ENCODE measurements at regions of chr1 and their contacts with region 1.

Region 1: DNA sequence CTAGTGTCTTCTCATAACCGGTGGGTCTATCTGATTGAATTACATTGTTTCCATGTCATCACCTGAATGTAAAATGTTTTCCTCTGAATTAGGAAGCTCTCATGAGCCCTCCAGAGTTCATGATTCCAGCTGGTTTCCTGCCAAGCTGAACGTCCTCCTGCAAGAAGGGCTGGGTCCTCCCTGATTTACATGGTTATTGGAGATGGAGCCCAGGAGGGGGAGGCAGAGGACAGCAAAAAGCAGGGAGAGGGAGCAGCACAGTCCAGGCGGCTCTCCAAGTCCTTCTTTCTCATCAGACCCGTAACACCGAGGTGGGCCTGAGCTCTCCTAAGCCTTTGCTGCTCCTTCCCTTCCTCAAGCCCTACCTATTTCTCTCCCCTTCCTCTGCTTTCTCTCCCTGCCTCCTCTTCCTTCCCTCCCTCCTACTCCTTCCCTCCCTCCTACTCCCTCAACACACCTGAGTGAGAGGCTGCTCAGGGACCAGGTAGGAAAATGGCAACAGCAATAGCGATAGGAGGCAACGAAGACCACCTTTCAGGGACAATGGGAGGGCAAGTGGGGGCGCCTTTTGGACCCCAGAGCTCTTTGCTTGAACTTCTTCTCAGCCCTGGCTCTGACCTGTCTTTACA is 265.9 kb downstream of the PRDM2 start:
- DNase-seq: peak; percentile 68
- H3K4me3 Mint-ChIP-seq: no peak overlapping the region
- H3K27ac Mint-ChIP-seq: no peak overlapping the region
- H3K4me1 Mint-ChIP-seq: peaks cover 9% of the 10 kb centered on the region
- H3K27me3 Mint-ChIP-seq: no peaks in the 10 kb centered on the region
- CTCF ChIP-seq: peak; percentile 79

Region 2: DNA sequence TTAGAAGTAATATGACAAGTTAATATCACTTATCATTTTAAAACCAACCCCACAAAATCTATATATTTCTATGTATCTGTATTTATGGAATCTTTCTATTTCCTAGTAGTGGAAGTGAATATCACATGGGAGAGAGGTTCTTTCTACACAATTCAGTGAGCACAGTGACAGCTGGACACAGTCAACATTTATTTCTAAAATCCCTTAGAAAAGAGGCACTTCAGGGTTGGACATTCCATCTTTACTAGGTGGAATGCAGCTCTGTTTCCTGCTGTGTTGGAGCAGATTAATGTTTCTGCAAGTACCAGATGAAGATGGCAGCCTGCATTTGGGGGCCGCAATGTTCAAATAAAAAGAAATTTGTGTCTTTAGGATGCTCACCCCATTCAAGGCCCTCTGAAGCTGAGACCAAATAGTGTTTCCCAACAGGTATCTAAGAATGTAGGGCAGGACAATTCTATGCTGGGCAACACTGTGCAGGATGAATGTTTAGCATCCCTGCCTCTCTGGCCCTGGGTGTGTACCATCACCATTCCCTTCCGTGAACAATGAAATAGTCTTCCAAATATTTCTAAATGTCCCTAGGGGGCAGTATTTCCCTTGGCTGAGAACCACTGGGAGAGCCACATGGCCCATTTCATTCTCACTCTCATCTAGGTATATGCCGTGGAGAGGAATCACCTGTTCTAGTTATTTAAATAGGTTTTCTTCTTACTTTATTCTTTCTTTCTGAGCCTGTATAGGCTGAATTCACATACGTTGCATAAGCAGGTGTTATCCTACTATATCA is 128.9 kb after region 1 on chr1:
- CTCF ChIA-PET with region 1: interaction called, 3 read pairs
- POLR2A ChIA-PET with region 1: no interaction called
- intact Hi-C with region 1: loop called (anchors 5 kb)
- DNase-seq: peak; percentile 43
- H3K4me3 Mint-ChIP-seq: no peak overlapping the region
- H3K27ac Mint-ChIP-seq: no peak overlapping the region
- H3K4me1 Mint-ChIP-seq: peaks cover 4% of the 10 kb centered on the region
- H3K27me3 Mint-ChIP-seq: no peaks in the 10 kb centered on the region
- CTCF ChIP-seq: peak; percentile 43

Region 3: GRCh38 chr1:14113841-14114567 is 148.1 kb after region 1 on chr1:
- CTCF ChIA-PET with region 1: interaction called, 12 read pairs
- POLR2A ChIA-PET with region 1: interaction called, 5 read pairs
- intact Hi-C with region 1: loop called (anchors 1 kb)
- DNase-seq: peak; percentile 65
- H3K4me3 Mint-ChIP-seq: no peak overlapping the region
- H3K27ac Mint-ChIP-seq: no peak overlapping the region
- H3K4me1 Mint-ChIP-seq: peaks cover 43% of the 10 kb centered on the region
- H3K27me3 Mint-ChIP-seq: no peaks in the 10 kb centered on the region
- CTCF ChIP-seq: peak; percentile 82

Region 4: DNA sequence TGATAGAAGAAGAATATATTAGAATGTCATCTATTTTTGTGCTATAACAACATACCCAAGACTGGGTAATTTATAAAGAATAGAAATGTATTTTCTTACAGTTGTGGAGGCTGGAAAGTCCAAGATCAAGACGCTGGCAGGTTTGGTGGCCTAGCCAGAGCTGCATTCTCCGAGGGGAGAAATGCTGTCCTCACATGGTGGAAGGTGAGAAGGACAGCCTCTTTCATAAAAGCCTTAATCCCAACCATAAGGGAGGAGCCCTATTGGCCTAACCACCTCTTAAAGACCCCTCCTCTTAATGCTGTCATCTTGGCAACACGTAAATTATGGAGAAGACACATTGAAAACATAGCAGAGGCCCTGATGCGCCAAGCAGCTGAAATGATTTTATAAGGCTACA is 572.5 kb after region 1 on chr1:
- CTCF ChIA-PET with region 1: interaction called, 3 read pairs
- POLR2A ChIA-PET with region 1: no interaction called
- intact Hi-C with region 1: loop called (anchors 5 kb)
- DNase-seq: no peak
- H3K4me3 Mint-ChIP-seq: no peak overlapping the region
- H3K27ac Mint-ChIP-seq: no peak overlapping the region
- H3K4me1 Mint-ChIP-seq: peaks cover 10% of the 10 kb centered on the region
- H3K27me3 Mint-ChIP-seq: no peaks in the 10 kb centered on the region
- CTCF ChIP-seq: no peak

Region 5: DNA sequence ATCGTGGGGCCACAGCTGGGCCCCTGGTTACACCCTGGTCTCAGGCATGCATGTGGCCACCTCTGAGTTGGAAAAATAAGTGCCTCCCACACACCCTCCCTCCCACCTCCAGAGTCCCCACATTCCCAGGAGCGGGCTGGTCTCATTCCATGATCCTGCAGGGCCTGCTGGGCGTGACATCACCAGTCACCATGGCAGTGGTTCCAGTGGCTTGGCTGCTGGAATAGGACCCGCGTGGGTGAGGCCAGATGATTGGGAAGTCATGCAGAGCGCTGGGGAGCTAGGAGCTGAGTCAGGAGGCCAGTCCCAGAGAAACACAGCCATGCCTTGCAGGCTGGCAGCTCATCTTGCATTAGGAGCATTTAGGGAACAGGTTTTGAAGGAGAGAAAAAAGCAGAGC is 1062.2 kb after region 1 on chr1:
- CTCF ChIA-PET with region 1: interaction called, 10 read pairs
- POLR2A ChIA-PET with region 1: no interaction called
- intact Hi-C with region 1: loop called (anchors 5 kb)
- DNase-seq: no peak
- H3K4me3 Mint-ChIP-seq: no peak overlapping the region
- H3K27ac Mint-ChIP-seq: no peak overlapping the region
- H3K4me1 Mint-ChIP-seq: peaks cover 9% of the 10 kb centered on the region
- H3K27me3 Mint-ChIP-seq: no peaks in the 10 kb centered on the region
- CTCF ChIP-seq: no peak

Region 6: DNA sequence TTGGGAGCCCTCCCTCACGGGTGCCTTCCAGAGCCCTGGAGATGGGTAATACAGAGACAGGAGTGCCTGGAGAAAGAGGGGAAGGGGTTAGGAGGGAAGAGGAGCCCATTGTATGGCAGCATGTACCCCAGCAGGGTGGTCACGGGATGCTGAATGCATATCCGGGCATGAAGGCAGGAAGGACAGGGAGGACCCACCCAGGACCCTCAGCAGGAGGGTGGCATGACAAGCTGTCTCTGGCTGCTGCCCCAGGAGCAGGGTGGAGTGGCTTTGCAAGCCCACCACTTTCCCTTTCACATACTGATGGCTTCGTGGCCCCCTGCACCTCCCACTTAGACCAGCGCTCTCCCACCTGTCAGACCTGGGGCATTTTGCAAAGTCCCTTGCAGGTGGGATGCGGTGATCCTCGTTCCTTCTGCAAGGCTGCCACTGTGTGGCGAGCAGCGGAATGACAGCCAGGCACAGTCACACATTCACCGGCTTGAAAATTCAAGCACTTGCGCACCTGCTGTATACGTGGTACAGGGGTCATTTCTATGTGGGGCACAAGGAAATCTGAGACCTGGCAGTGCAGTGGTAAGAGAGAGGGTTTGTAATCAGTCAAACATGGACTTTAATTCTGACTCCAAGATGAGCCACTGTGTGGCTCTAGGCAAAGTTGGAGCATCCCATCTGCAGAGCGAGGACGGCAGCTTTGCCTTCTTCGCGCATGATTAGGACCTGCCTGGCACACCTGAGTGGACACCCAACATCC is 1134.4 kb after region 1 on chr1:
- CTCF ChIA-PET with region 1: interaction called, 6 read pairs
- POLR2A ChIA-PET with region 1: no interaction called
- intact Hi-C with region 1: loop called (anchors 5 kb)
- DNase-seq: peak; percentile 49
- H3K4me3 Mint-ChIP-seq: no peak overlapping the region
- H3K27ac Mint-ChIP-seq: no peak overlapping the region
- H3K4me1 Mint-ChIP-seq: peaks cover 6% of the 10 kb centered on the region
- H3K27me3 Mint-ChIP-seq: peaks cover 38% of the 10 kb centered on the region
- CTCF ChIP-seq: peak; percentile 88

Measured in MCF 10A (cell line).